ENCODE measurements at regions of chrX and their contacts with region 1.

Region 1: GRCh38 chrX:10119399-10119990 is 37.3 kb upstream of the CLCN4 start:
- DNase-seq: peak; percentile 52 to 83
- H3K4me3 ChIP-seq: no peak overlapping the region
- H3K4me1 ChIP-seq: no peaks in the 10 kb centered on the region
- H3K27me3 ChIP-seq: no peaks in the 10 kb centered on the region

Region 2: DNA sequence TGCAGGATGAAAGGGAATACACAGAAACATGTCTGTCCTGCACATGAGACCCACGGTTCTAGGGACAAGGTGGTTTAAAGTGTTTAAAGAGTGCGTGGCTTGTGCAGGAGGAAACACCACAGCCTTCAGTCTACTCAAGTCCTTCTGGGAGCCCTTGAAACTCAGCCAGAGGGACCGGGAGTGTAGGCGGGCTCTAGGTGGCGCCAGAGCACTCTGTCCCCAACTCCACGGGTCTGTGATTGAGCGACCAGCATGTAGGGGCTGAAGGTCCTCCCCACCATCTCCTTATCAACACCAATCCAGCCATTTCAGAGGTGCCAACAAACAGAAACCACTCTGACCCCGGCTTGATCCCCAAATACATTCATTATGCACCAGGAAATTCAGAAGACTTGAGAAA is 234.3 kb before region 1 on chrX:
- in situ Hi-C with region 1: loop called (anchors 25 kb)
- DNase-seq: peak; percentile 54 to 80
- H3K4me3 ChIP-seq: no peak overlapping the region
- H3K4me1 ChIP-seq: no peaks in the 10 kb centered on the region
- H3K27me3 ChIP-seq: no peaks in the 10 kb centered on the region

Region 3: GRCh38 chrX:9995855-9996339 is 123.6 kb before region 1 on chrX:
- in situ Hi-C with region 1: loop called (anchors 5 kb)
- DNase-seq: peak; percentile 71 to 92
- H3K4me3 ChIP-seq: no peak overlapping the region
- H3K4me1 ChIP-seq: peaks cover 3% of the 10 kb centered on the region; the same call in 1 of the 2 replicates
- H3K27me3 ChIP-seq: no peaks in the 10 kb centered on the region